ENCODE measurements at regions of chr13 and their contacts with region 1.

Region 1: GRCh38 chr13:25037057-25037813 is 58.7 kb upstream of the PABPC3 start:
- DNase-seq: peak in 6 of 9 donors; percentile 6 to 53 (median 36)
- ATAC-seq: peak; percentile 70
- H3K4me3 ChIP-seq: no peak overlapping the region
- H3K4me3 Mint-ChIP-seq: no peak overlapping the region
- H3K27ac ChIP-seq: no peak overlapping the region
- H3K27ac Mint-ChIP-seq: no peak overlapping the region
- H3K4me1 ChIP-seq: no peaks in the 10 kb centered on the region
- H3K4me1 Mint-ChIP-seq: no peaks in the 10 kb centered on the region
- H3K27me3 ChIP-seq: no peaks in the 10 kb centered on the region
- H3K27me3 Mint-ChIP-seq: peaks cover 37 to 64% (median 50%) of the 10 kb centered on the region in 5 donors

Region 2: GRCh38 chr13:24802074-24802473 is 235.2 kb before region 1 on chr13:
- CTCF ChIA-PET with region 1: no interaction called
- POLR2A ChIA-PET with region 1: no interaction called
- intact Hi-C with region 1: no loop called
- DNase-seq: no peak
- ATAC-seq: no peak
- H3K4me3 ChIP-seq: no peak overlapping the region
- H3K4me3 Mint-ChIP-seq: no peak overlapping the region
- H3K27ac ChIP-seq: no peak overlapping the region
- H3K27ac Mint-ChIP-seq: no peak overlapping the region
- H3K4me1 ChIP-seq: no peaks in the 10 kb centered on the region
- H3K4me1 Mint-ChIP-seq: no peaks in the 10 kb centered on the region
- H3K27me3 ChIP-seq: no peaks in the 10 kb centered on the region
- H3K27me3 Mint-ChIP-seq: peaks cover 24 to 39% (median 27%) of the 10 kb centered on the region in 5 donors

Region 3: GRCh38 chr13:25001476-25002206 is 35.6 kb before region 1 on chr13:
- CTCF ChIA-PET with region 1: no interaction called
- POLR2A ChIA-PET with region 1: no interaction called
- intact Hi-C with region 1: loop called (anchors 1 kb)
- DNase-seq: no peak
- ATAC-seq: no peak
- H3K4me3 ChIP-seq: no peak overlapping the region
- H3K4me3 Mint-ChIP-seq: no peak overlapping the region
- H3K27ac ChIP-seq: no peak overlapping the region
- H3K27ac Mint-ChIP-seq: no peak overlapping the region
- H3K4me1 ChIP-seq: no peaks in the 10 kb centered on the region
- H3K4me1 Mint-ChIP-seq: peaks cover 0 to 3% (median 0%) of the 10 kb centered on the region in 7 donors
- H3K27me3 ChIP-seq: no peaks in the 10 kb centered on the region
- H3K27me3 Mint-ChIP-seq: peaks cover 56 to 68% (median 57%) of the 10 kb centered on the region in 5 donors

Region 4: GRCh38 chr13:25018729-25019115 is 18.5 kb before region 1 on chr13:
- CTCF ChIA-PET with region 1: no interaction called
- POLR2A ChIA-PET with region 1: no interaction called
- intact Hi-C with region 1: loop called in 1 of 2 experiments (anchors 1 kb)
- DNase-seq: no peak
- ATAC-seq: no peak
- H3K4me3 ChIP-seq: no peak overlapping the region
- H3K4me3 Mint-ChIP-seq: peak overlapping the region in 4 of 10 donors; percentile 16 to 76 (median 38)
- H3K27ac ChIP-seq: no peak overlapping the region
- H3K27ac Mint-ChIP-seq: no peak overlapping the region
- H3K4me1 ChIP-seq: no peaks in the 10 kb centered on the region
- H3K4me1 Mint-ChIP-seq: peaks cover 6 to 12% (median 8%) of the 10 kb centered on the region in 7 donors
- H3K27me3 ChIP-seq: peaks cover 0 to 3% of the 10 kb centered on the region in 2 donors
- H3K27me3 Mint-ChIP-seq: peaks cover 45 to 57% (median 53%) of the 10 kb centered on the region in 5 donors

Measured in naive thymus-derived CD4-positive, alpha-beta T cell (primary cell).